ENCODE measurements at regions of chr4 and their contacts with region 1.

Region 1: GRCh38 chr4:37603070-37603468 is 83.1 kb downstream of the RELL1 start:
- DNase-seq: peak; percentile 77 to 86
- H3K4me3 ChIP-seq: no peak overlapping the region
- H3K27ac ChIP-seq: no peak overlapping the region
- H3K4me1 ChIP-seq: no peaks in the 10 kb centered on the region
- H3K27me3 ChIP-seq: no peaks in the 10 kb centered on the region
- CTCF ChIP-seq: peak; percentile 91 to 97 (median 96)
- POLR2A ChIP-seq: no peak

Region 2: GRCh38 chr4:37686373-37687193 is 83.5 kb after region 1 on chr4 and contains the start of gene RELL1:
- intact Hi-C with region 1: no loop called
- DNase-seq: peak; percentile 100
- H3K4me3 ChIP-seq: peak within 1 kb of the TSS; percentile 55 to 82
- H3K27ac ChIP-seq: peak within 1 kb of the TSS; percentile 94 to 97
- H3K4me1 ChIP-seq: peaks cover 0 to 7% of the 10 kb centered on the region in 2 donors
- H3K27me3 ChIP-seq: no peaks in the 10 kb centered on the region
- CTCF ChIP-seq: no peak
- POLR2A ChIP-seq: peak in 1 of 2 donors; percentile 9
- total RNA-seq, gene RELL1: 21.2 to 64.0 (median 44.3) TPM

Region 3: GRCh38 chr4:37793562-37793961 is 190.5 kb after region 1 on chr4:
- intact Hi-C with region 1: loop called (anchors 10 kb)
- DNase-seq: no peak
- H3K4me3 ChIP-seq: no peak overlapping the region
- H3K27ac ChIP-seq: no peak overlapping the region
- H3K4me1 ChIP-seq: no peaks in the 10 kb centered on the region
- H3K27me3 ChIP-seq: no peaks in the 10 kb centered on the region
- CTCF ChIP-seq: peak; percentile 26 to 55 (median 40)
- POLR2A ChIP-seq: no peak

Measured in uterus (tissue), 4 donors.